Caco-2 (cell line): ENCODE measurements at regions of chr12 and their contacts with region 1.

Region 1: GRCh38 chr12:52980693-52981423 is 25.4 kb upstream of the EIF4B start:
- DNase-seq: peak; percentile 95 to 96
- H3K4me3 ChIP-seq: no peak overlapping the region
- H3K4me3 Mint-ChIP-seq: peak overlapping the region; percentile 61
- H3K27ac Mint-ChIP-seq: peak overlapping the region; percentile 85
- H3K4me1 ChIP-seq: peaks cover 33% of the 10 kb centered on the region
- H3K4me1 Mint-ChIP-seq: peaks cover 55% of the 10 kb centered on the region
- H3K27me3 ChIP-seq: no peaks in the 10 kb centered on the region
- H3K27me3 Mint-ChIP-seq: no peaks in the 10 kb centered on the region
- CTCF ChIP-seq: peak; percentile 98

Region 2: GRCh38 chr12:52390739-52391617 is 589.9 kb before region 1 on chr12:
- CTCF ChIA-PET with region 1: interaction called, 8 read pairs
- POLR2A ChIA-PET with region 1: no interaction called
- intact Hi-C with region 1: loop called (anchors 10 kb)
- DNase-seq: peak in 1 of 2 experiments; percentile 47
- H3K4me3 ChIP-seq: no peak overlapping the region
- H3K4me3 Mint-ChIP-seq: no peak overlapping the region
- H3K27ac Mint-ChIP-seq: no peak overlapping the region
- H3K4me1 ChIP-seq: no peaks in the 10 kb centered on the region
- H3K4me1 Mint-ChIP-seq: no peaks in the 10 kb centered on the region
- H3K27me3 ChIP-seq: no peaks in the 10 kb centered on the region; the same call in 1 of the 2 replicates
- H3K27me3 Mint-ChIP-seq: peaks cover 2% of the 10 kb centered on the region
- CTCF ChIP-seq: peak; percentile 73 to 77

Region 3: GRCh38 chr12:52884526-52885293 is 96.1 kb before region 1 on chr12:
- CTCF ChIA-PET with region 1: interaction called, 140 read pairs
- POLR2A ChIA-PET with region 1: interaction called, 15 read pairs
- intact Hi-C with region 1: loop called (anchors 1 kb)
- DNase-seq: peak; percentile 89 to 92
- H3K4me3 ChIP-seq: peak overlapping the region; percentile 15; the same call in 1 of the 2 replicates
- H3K4me3 Mint-ChIP-seq: peak overlapping the region; percentile 68
- H3K27ac Mint-ChIP-seq: peak overlapping the region; percentile 95
- H3K4me1 ChIP-seq: peaks cover 55% of the 10 kb centered on the region
- H3K4me1 Mint-ChIP-seq: peaks cover 22% of the 10 kb centered on the region
- H3K27me3 ChIP-seq: no peaks in the 10 kb centered on the region
- H3K27me3 Mint-ChIP-seq: no peaks in the 10 kb centered on the region
- CTCF ChIP-seq: peak; percentile 93 to 97

Region 4: DNA sequence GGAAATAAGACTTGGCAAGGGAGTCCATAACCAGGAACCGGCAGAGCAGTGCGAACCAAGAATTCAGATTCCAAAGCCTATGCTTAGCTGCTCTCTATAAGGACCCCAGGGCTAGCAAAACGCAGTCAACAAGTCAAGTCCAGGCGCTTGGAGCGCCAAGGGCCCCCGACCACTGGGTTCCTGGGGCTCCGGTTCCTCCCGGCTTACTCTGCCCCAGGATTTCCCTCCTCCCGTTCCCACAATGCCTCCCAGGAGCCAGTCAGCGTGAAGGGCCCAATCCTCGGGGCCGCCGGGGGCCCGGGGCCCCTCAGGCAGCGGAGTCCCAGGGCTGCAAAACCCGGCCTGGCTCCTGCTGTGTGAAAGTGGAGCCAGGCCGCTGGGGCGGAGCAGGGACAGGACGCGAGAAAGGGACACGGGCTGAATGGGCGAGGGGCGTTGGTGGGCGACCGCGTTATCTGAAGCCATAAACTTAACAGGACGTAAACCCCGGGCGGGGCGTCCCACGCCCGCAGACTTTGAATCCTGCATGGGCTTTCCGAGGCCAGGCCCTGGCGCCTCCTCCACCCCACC is 77.5 kb before region 1 on chr12:
- CTCF ChIA-PET with region 1: interaction called, 31 read pairs
- POLR2A ChIA-PET with region 1: interaction called, 21 read pairs
- intact Hi-C with region 1: loop called (anchors 1 kb)
- DNase-seq: peak in 1 of 2 experiments; percentile 61
- H3K4me3 ChIP-seq: peak overlapping the region; percentile 99
- H3K4me3 Mint-ChIP-seq: peak overlapping the region; percentile 95
- H3K27ac Mint-ChIP-seq: peak overlapping the region; percentile 98
- H3K4me1 ChIP-seq: peaks cover 72% of the 10 kb centered on the region
- H3K4me1 Mint-ChIP-seq: peaks cover 54% of the 10 kb centered on the region
- H3K27me3 ChIP-seq: no peaks in the 10 kb centered on the region
- H3K27me3 Mint-ChIP-seq: peaks cover 3% of the 10 kb centered on the region
- CTCF ChIP-seq: no peak

Region 5: DNA sequence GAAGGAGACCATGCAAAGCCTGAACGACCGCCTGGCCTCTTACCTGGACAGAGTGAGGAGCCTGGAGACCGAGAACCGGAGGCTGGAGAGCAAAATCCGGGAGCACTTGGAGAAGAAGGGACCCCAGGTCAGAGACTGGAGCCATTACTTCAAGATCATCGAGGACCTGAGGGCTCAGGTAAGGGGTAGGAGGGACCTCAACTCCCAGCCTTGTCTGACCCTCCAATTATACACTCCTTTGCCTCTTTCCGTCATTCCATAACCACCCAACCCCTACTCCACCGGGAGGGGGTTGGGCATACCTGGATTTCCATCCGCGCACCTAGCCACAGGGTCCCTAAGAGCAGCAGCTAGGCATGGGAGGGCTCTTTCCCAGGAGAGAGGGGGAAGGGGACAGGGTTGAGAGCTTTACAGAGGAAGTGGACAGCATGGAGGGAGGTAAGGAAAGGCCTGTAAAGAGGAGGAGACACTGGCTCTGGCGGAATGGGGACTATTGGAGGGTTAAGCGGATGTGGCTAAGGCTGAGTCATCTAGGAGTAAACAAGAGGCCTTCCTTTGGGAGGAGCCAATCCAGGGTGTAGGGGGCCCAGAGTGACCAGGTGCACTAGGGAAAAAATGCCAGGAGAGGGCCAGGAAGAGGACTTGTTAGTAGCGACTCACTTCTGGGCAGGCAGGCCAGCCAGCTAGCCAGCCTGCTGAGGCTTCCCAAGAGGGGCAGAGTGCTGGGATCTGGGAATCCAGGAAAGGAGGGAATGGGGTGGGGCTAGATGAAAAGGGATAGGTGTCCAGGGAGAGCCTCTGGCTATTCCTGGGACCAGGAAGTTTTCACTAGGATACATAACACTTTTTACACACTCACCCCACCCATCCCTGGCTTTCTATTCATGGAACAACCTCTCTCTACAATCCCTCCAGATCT is 31.2 kb before region 1 on chr12:
- CTCF ChIA-PET with region 1: interaction called, 10 read pairs
- POLR2A ChIA-PET with region 1: interaction called, 11 read pairs
- intact Hi-C with region 1: loop called (anchors 2 kb)
- DNase-seq: peak; percentile 77 to 83
- H3K4me3 ChIP-seq: peak overlapping the region; percentile 72
- H3K4me3 Mint-ChIP-seq: peak overlapping the region; percentile 89
- H3K27ac Mint-ChIP-seq: peak overlapping the region; percentile 99
- H3K4me1 ChIP-seq: peaks cover 50% of the 10 kb centered on the region
- H3K4me1 Mint-ChIP-seq: peaks cover 29% of the 10 kb centered on the region
- H3K27me3 ChIP-seq: no peaks in the 10 kb centered on the region
- H3K27me3 Mint-ChIP-seq: no peaks in the 10 kb centered on the region
- CTCF ChIP-seq: no peak

Region 6: GRCh38 chr12:52969828-52970569 is 10.9 kb before region 1 on chr12:
- CTCF ChIA-PET with region 1: interaction called, 10 read pairs
- POLR2A ChIA-PET with region 1: no interaction called
- intact Hi-C with region 1: no loop called
- DNase-seq: peak; percentile 93 to 96
- H3K4me3 ChIP-seq: no peak overlapping the region
- H3K4me3 Mint-ChIP-seq: peak overlapping the region; percentile 69
- H3K27ac Mint-ChIP-seq: peak overlapping the region; percentile 98
- H3K4me1 ChIP-seq: peaks cover 70% of the 10 kb centered on the region
- H3K4me1 Mint-ChIP-seq: peaks cover 55% of the 10 kb centered on the region
- H3K27me3 ChIP-seq: no peaks in the 10 kb centered on the region
- H3K27me3 Mint-ChIP-seq: no peaks in the 10 kb centered on the region
- CTCF ChIP-seq: no peak